Mammary epithelial cell (primary cell): ENCODE measurements at regions of chr19 and their contacts with region 1.

Region 1: GRCh38 chr19:45376045-45376724 is 5.8 kb upstream of the ERCC2 start:
- DNase-seq: peak; percentile 53
- H3K4me3 ChIP-seq: no peak overlapping the region
- H3K27ac ChIP-seq: peak overlapping the region; percentile 13
- H3K4me1 ChIP-seq: peaks cover 6% of the 10 kb centered on the region
- H3K27me3 ChIP-seq: no peaks in the 10 kb centered on the region
- CTCF ChIP-seq: no peak

Region 2: GRCh38 chr19:45200568-45200994 is 175.6 kb before region 1 on chr19:
- CTCF ChIA-PET with region 1: interaction called, 11 read pairs
- dilution Hi-C with region 1: no loop called
- in situ Hi-C with region 1: no loop called
- intact Hi-C with region 1: no loop called
- DNase-seq: peak; percentile 30
- H3K4me3 ChIP-seq: no peak overlapping the region
- H3K27ac ChIP-seq: no peak overlapping the region
- H3K4me1 ChIP-seq: no peaks in the 10 kb centered on the region
- H3K27me3 ChIP-seq: no peaks in the 10 kb centered on the region
- CTCF ChIP-seq: peak; percentile 39 to 47